Mammary epithelial cell (primary cell): ENCODE measurements at regions of chr3 and their contacts with region 1.

Region 1: GRCh38 chr3:18988614-18989229 is 159.6 kb upstream of the KCNH8 start:
- DNase-seq: peak; percentile 8
- H3K4me3 ChIP-seq: no peak overlapping the region
- H3K27ac ChIP-seq: no peak overlapping the region
- H3K4me1 ChIP-seq: no peaks in the 10 kb centered on the region
- H3K27me3 ChIP-seq: no peaks in the 10 kb centered on the region
- CTCF ChIP-seq: peak; percentile 29 to 53

Region 2: DNA sequence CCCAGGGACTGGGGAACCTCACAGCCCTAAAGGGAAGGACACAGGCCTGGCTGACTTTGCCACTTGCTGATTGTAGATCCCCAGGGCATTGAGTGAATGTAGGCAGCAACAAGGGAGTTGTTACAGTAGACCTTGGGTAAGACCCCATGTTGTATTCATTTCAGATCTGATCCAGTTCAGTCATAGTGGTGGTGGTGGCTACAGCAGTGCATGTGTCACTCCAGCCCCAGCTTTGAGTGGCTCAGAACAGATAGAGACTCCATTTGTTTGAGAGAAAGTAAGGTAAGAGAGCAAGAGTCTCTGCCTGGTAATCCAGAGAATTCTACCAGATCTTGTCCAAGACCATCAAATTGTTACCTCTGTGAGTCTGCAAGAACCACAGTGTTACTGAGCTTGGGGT is 284.9 kb before region 1 on chr3:
- CTCF ChIA-PET with region 1: no interaction called
- dilution Hi-C with region 1: no loop called
- in situ Hi-C with region 1: no loop called
- intact Hi-C with region 1: no loop called
- DNase-seq: no peak
- H3K4me3 ChIP-seq: no peak overlapping the region
- H3K27ac ChIP-seq: no peak overlapping the region
- H3K4me1 ChIP-seq: no peaks in the 10 kb centered on the region
- H3K27me3 ChIP-seq: no peaks in the 10 kb centered on the region
- CTCF ChIP-seq: no peak

Region 3: GRCh38 chr3:18847583-18848197 is 141.0 kb before region 1 on chr3:
- CTCF ChIA-PET with region 1: interaction called, 4 read pairs
- dilution Hi-C with region 1: no loop called
- in situ Hi-C with region 1: no loop called
- intact Hi-C with region 1: loop called (anchors 2 kb)
- DNase-seq: no peak
- H3K4me3 ChIP-seq: no peak overlapping the region
- H3K27ac ChIP-seq: no peak overlapping the region
- H3K4me1 ChIP-seq: no peaks in the 10 kb centered on the region
- H3K27me3 ChIP-seq: no peaks in the 10 kb centered on the region
- CTCF ChIP-seq: peak; percentile 39 to 49

Region 4: DNA sequence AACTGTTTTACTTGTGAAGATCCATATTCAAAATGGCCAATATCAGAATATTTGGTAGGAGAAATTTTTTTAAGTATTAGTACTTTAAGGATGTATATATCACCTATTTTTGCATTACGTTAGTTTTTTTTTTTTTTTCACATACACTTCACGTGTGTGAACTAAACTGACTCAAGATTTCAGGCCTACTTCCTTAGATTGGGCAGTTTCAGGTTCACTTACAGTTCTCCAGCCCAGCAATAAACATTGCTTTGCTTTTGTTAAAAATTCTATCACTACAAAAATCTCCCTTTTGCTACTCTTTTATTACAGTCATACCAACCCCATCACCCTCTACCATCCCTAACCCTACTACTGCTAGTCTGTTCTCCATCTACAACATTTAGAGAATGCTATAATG is 343.2 kb after region 1 on chr3:
- CTCF ChIA-PET with region 1: no interaction called
- dilution Hi-C with region 1: no loop called
- in situ Hi-C with region 1: no loop called
- intact Hi-C with region 1: no loop called
- DNase-seq: no peak
- H3K4me3 ChIP-seq: no peak overlapping the region
- H3K27ac ChIP-seq: no peak overlapping the region
- H3K4me1 ChIP-seq: no peaks in the 10 kb centered on the region
- H3K27me3 ChIP-seq: no peaks in the 10 kb centered on the region
- CTCF ChIP-seq: no peak